Activated T-helper 1 cell treated with anti-CD3 and anti-CD28 coated beads, Interleukin-12 subunit alpha, Interleukin-12 subunit beta, Interleukin-2, Interleukin-4 antibody, amounts not matched to agents 30 ng/mL and 10 ng/mL and 1 ng/mL, durations not matched to agents 14 hours and 24 hours and 36 hours (primary cell): ENCODE measurements at regions of chr3 and their contacts with region 1.

Region 1: DNA sequence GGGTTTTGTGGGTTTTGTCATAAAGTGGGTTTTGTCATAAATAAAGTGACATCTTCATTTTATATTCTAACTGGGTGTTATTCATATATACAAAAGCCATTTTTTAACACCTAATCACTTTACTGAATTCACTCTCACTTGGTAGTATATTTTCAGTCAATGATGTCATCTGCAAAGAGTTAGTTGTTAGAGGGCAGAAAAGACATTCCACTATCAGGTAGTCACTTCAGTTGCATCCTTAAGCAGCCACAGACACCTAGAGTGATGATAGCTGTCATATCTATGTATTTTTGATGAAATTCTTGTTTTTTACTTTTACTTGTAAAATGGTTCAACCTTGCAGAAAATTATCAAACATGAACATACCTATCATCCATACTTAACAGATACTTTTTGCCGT is 89.0 kb downstream of the DHX36 start:
- DNase-seq: no peak
- H3K4me3 Mint-ChIP-seq: no peak overlapping the region
- H3K27ac Mint-ChIP-seq: no peak overlapping the region
- H3K4me1 Mint-ChIP-seq: no peaks in the 10 kb centered on the region
- H3K27me3 Mint-ChIP-seq: peaks cover 8% of the 10 kb centered on the region

Region 2: GRCh38 chr3:154061001-154061370 is 174.3 kb before region 1 on chr3:
- intact Hi-C with region 1: no loop called
- DNase-seq: no peak
- H3K4me3 Mint-ChIP-seq: no peak overlapping the region
- H3K27ac Mint-ChIP-seq: no peak overlapping the region
- H3K4me1 Mint-ChIP-seq: no peaks in the 10 kb centered on the region
- H3K27me3 Mint-ChIP-seq: no peaks in the 10 kb centered on the region

Region 3: GRCh38 chr3:154120961-154121700 is 114.2 kb before region 1 on chr3 and contains the start of gene ARHGEF26:
- intact Hi-C with region 1: loop called (anchors 5 kb)
- DNase-seq: peak; percentile 66
- H3K4me3 Mint-ChIP-seq: peak within 1 kb of the TSS; percentile 79
- H3K27ac Mint-ChIP-seq: peak within 1 kb of the TSS; percentile 7
- H3K4me1 Mint-ChIP-seq: peaks cover 18% of the 10 kb centered on the region
- H3K27me3 Mint-ChIP-seq: peaks cover 69% of the 10 kb centered on the region
- total RNA-seq, gene ARHGEF26: 0.22 TPM in 1 of 2 replicates, not detected in the other

Region 4: DNA sequence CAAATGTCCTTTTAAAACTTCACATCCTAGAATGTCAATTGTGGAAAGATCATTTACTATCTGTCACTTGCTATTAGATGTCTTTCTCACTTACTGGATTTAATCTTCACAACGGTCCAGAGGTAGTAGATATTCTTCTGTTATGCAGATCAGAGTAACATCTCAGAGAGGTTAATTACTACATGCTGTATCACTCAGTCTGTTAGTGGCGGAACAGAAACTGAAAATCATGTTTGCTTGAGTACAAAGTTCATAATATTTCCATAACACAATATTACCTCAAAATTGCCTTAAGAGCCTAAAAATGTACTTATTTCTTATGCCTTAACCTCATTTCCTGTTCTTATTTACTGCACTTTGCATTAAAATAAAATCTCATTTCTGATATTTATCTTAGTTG is 223.2 kb after region 1 on chr3:
- intact Hi-C with region 1: no loop called
- DNase-seq: no peak
- H3K4me3 Mint-ChIP-seq: no peak overlapping the region
- H3K27ac Mint-ChIP-seq: no peak overlapping the region
- H3K4me1 Mint-ChIP-seq: no peaks in the 10 kb centered on the region
- H3K27me3 Mint-ChIP-seq: no peaks in the 10 kb centered on the region